Transverse colon (tissue), 4 donors: ENCODE measurements at regions of chr1 and their contacts with region 1.

Region 1: DNA sequence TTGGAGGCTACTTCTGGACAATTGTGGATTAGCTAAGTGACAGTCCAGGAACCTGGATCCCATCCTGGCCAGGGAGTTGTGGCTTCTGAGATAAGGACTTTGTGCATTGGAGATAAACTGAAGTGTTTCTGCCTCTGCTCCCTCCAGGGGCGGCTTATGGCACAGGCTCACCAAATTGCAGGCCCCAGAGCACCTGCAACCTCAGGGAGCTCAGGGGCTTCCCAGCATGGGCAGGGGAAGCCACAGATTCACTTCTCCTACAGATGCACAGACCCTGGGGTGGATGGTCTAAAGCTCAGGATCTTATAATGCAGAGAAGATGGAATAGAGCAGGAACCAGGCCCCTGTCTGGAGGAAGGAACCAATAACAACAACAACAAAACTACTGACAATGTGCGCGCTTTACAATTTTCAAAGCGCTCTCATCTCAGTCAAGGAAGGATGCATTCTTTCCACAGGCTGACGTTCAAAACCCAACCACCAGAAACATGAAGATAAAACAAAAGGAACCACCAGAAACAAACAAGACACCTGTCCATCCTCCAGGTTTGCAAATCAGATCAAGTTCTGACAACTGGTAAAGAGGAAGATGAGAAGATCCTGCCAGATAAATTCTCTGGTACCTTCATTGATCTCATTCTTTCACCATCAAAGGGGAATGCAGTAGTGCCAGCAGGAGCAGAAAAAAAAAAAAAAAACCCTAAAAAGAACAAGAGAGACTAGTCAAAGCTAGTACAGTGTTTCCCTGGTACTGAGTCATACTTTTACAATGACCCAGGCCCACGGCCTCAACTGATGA is 121.0 kb upstream of the IRF2BP2 start:
- DNase-seq: no peak
- H3K4me3 ChIP-seq: no peak overlapping the region
- H3K27ac ChIP-seq: peak overlapping the region in 1 of 4 donors; percentile 16
- H3K4me1 ChIP-seq: peaks cover 11 to 26% (median 16%) of the 10 kb centered on the region in 4 donors
- H3K27me3 ChIP-seq: no peaks in the 10 kb centered on the region
- CTCF ChIP-seq: no peak
- EP300 ChIP-seq: no peak
- POLR2A ChIP-seq: no peak

Region 2: GRCh38 chr1:234842726-234843641 is 112.0 kb after region 1 on chr1:
- in situ Hi-C with region 1: loop called in 3 of 4 experiments (anchors 25 kb)
- intact Hi-C with region 1: no loop called
- DNase-seq: no peak
- H3K4me3 ChIP-seq: no peak overlapping the region
- H3K27ac ChIP-seq: peak overlapping the region in 3 of 4 donors; percentile 13 to 34 (median 17)
- H3K4me1 ChIP-seq: peaks cover 0 to 39% (median 10%) of the 10 kb centered on the region in 4 donors
- H3K27me3 ChIP-seq: no peaks in the 10 kb centered on the region
- CTCF ChIP-seq: no peak
- EP300 ChIP-seq: no peak
- POLR2A ChIP-seq: no peak

Region 3: GRCh38 chr1:236168716-236169429 is 1437.9 kb after region 1 on chr1:
- in situ Hi-C with region 1: no loop called
- intact Hi-C with region 1: no loop called
- DNase-seq: no peak
- H3K4me3 ChIP-seq: no peak overlapping the region
- H3K27ac ChIP-seq: no peak overlapping the region
- H3K4me1 ChIP-seq: no peaks in the 10 kb centered on the region
- H3K27me3 ChIP-seq: no peaks in the 10 kb centered on the region
- CTCF ChIP-seq: peak in 3 of 5 experiments; percentile 29 to 46 (median 42)
- EP300 ChIP-seq: no peak
- POLR2A ChIP-seq: no peak